ENCODE measurements at regions of chr2 and their contacts with region 1.

Region 1: GRCh38 chr2:65432227-65433190 is at the start of gene SPRED2:
- DNase-seq: peak; percentile 95
- ATAC-seq: peak; percentile 18
- H3K4me3 ChIP-seq: peak within 1 kb of the TSS; percentile 99
- H3K27ac ChIP-seq: peak within 1 kb of the TSS; percentile 68
- H3K4me1 ChIP-seq: peaks cover 25% of the 10 kb centered on the region
- H3K27me3 ChIP-seq: no peaks in the 10 kb centered on the region
- CTCF ChIP-seq: no peak
- total RNA-seq, gene SPRED2: 16.2 and 18.1 TPM in 2 replicates

Region 2: DNA sequence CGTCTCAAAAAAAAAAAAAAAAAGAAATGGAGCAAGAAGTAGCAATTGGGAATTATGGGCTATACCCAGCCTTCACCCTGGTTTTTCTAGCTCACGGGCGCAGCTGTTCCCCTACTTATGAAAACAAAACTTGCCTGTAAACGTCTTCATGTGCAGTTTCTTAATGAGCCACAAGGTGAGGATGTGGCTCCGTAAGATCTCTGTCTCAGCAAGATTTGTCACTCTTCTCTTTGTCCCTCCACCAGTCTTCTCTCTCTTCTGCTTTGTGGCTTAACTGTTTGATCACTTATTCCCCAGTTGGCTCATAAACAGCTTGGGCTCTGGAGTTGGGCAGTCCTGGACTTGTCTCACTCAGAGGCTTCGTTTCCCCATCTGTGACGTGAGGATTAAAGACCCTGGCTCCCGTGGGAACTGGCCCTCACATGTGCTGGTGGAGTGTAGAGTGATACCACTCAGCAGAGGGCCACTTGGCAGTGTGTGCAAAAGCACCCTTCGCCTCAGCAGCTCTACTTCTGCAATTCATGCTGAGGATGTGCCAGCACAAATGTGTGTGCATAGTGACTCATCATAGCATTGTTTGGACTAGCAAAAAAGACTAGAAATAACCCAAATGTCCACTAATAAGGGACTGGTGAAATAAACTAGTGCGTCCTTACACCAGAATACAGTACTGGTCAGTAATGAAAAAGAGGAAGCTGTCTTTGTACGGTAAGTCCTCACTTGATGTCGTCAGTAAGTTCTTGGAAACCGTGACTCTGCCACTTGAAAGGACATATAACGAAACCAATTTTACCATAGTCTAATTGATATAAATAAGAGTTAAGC is 367.6 kb before region 1 on chr2:
- CTCF ChIA-PET with region 1: no interaction called
- POLR2A ChIA-PET with region 1: no interaction called
- intact Hi-C with region 1: loop called (anchors 5 kb)
- DNase-seq: peak; percentile 84
- ATAC-seq: peak; percentile 91
- H3K4me3 ChIP-seq: peak overlapping the region; percentile 28
- H3K27ac ChIP-seq: peak overlapping the region; percentile 78
- H3K4me1 ChIP-seq: peaks cover 30% of the 10 kb centered on the region
- H3K27me3 ChIP-seq: no peaks in the 10 kb centered on the region
- CTCF ChIP-seq: peak; percentile 86

Region 3: DNA sequence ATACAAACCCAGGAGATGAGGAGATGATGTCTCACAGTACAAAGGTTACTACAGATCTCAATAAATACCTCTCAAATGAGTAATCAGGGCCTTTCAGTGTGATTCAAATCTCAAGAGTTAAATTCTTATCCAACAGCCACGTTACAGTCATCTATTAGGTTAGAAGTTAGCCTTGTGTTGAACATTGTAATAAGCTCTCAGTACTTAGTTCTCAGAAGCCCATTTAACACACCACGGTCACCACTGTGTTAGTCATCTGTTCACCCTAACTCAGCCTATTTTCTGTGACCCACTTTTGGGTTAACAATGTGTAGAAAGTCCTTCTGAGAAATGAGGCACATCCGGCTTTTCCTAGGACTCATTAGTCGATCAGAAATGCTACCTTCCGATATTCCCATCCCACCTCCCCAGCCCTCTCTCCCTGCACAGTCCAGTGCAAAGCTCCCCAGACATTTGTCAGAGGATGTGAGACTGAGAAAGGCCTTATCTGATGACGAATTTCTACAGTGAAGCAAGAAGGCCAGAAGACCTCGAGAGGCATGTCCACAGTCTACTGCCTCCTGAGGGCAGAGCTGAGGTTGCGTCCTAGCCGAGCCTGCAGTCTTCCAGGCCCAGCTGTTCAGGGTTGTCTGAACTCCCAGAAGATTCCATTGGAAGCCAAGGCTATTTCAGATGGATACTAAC is 112.3 kb before region 1 on chr2:
- CTCF ChIA-PET with region 1: interaction called, 4 read pairs
- POLR2A ChIA-PET with region 1: interaction called, 6 read pairs
- intact Hi-C with region 1: loop called (anchors 1 kb)
- DNase-seq: peak; percentile 97
- ATAC-seq: peak; percentile 76
- H3K4me3 ChIP-seq: peak overlapping the region; percentile 33; the same call in 1 of the 2 replicates
- H3K27ac ChIP-seq: peak overlapping the region; percentile 93
- H3K4me1 ChIP-seq: peaks cover 75% of the 10 kb centered on the region
- H3K27me3 ChIP-seq: no peaks in the 10 kb centered on the region
- CTCF ChIP-seq: peak; percentile 74

Region 4: GRCh38 chr2:65382776-65383357 is 49.6 kb before region 1 on chr2:
- CTCF ChIA-PET with region 1: interaction called, 3 read pairs
- POLR2A ChIA-PET with region 1: interaction called, 5 read pairs
- intact Hi-C with region 1: loop called (anchors 1 kb)
- DNase-seq: peak; percentile 99
- ATAC-seq: peak; percentile 78
- H3K4me3 ChIP-seq: peak overlapping the region; percentile 40; the same call in 1 of the 2 replicates
- H3K27ac ChIP-seq: peak overlapping the region; percentile 94
- H3K4me1 ChIP-seq: peaks cover 76% of the 10 kb centered on the region
- H3K27me3 ChIP-seq: no peaks in the 10 kb centered on the region
- CTCF ChIP-seq: peak; percentile 73

Region 5: DNA sequence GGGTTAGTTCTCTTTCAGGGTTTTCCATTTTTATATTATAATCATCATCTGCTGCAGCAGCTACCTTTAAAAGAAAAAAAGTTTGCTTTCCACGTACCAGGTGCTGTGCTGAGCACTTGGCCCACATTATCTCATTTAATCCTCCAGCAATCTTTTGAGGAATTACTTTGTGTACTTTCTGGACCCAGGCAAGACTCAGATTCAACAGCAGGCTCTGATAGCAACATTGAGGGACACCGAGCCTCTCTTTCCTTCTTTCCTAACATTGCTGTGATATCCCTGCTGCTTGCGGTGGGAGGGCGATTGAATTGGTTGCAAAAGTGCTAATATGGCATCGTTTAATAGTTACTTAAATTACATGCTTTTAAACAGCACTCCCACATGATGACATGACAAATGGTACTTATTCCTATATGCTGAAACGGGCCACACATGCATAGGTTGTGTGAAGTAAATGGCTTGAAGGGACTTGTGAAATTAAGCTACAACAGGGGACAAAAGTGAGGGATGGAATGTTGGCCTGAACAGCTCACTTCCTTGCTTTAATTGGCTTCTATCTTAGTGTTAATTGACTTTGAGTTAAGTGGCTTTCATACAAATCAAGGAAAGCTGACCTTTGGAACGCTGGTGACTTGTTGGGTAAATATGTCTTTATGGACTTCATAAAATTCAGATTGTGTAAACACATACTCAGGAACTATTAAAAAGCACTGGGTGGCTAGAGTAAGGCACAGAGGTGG is 21.3 kb before region 1 on chr2:
- CTCF ChIA-PET with region 1: no interaction called
- POLR2A ChIA-PET with region 1: interaction called, 5 read pairs
- intact Hi-C with region 1: loop called (anchors 1 kb)
- DNase-seq: peak; percentile 77
- ATAC-seq: peak; percentile 83
- H3K4me3 ChIP-seq: peak overlapping the region; percentile 47; the same call in 1 of the 2 replicates
- H3K27ac ChIP-seq: peak overlapping the region; percentile 76
- H3K4me1 ChIP-seq: peaks cover 58% of the 10 kb centered on the region
- H3K27me3 ChIP-seq: no peaks in the 10 kb centered on the region
- CTCF ChIP-seq: no peak

Region 6: GRCh38 chr2:65754219-65754618 is 321.7 kb after region 1 on chr2:
- CTCF ChIA-PET with region 1: no interaction called
- POLR2A ChIA-PET with region 1: interaction called, 11 read pairs
- intact Hi-C with region 1: no loop called
- DNase-seq: peak; percentile 5
- ATAC-seq: no peak
- H3K4me3 ChIP-seq: no peak overlapping the region
- H3K27ac ChIP-seq: no peak overlapping the region
- H3K4me1 ChIP-seq: peaks cover 3% of the 10 kb centered on the region; the same call in 1 of the 2 replicates
- H3K27me3 ChIP-seq: peaks cover 15% of the 10 kb centered on the region; the same call in 1 of the 2 replicates
- CTCF ChIP-seq: no peak

Measured in PC-3 (cell line).